Activated CD4-positive, alpha-beta T cell treated with anti-CD3 and anti-CD28 coated beads, Interleukin-2, amount 10 ng/mL, durations not matched to agents 24 days and 14 days (primary cell): ENCODE measurements at regions of chr10 and their contacts with region 1.

Region 1: GRCh38 chr10:97701438-97702069 is 12.0 kb upstream of the MARVELD1 start:
- DNase-seq: peak; percentile 89
- H3K4me3 Mint-ChIP-seq: no peak overlapping the region
- H3K27ac Mint-ChIP-seq: no peak overlapping the region
- H3K4me1 Mint-ChIP-seq: no peaks in the 10 kb centered on the region
- H3K27me3 Mint-ChIP-seq: peaks cover 7% of the 10 kb centered on the region

Region 2: GRCh38 chr10:97356318-97356914 is 345.1 kb before region 1 on chr10:
- intact Hi-C with region 1: no loop called
- DNase-seq: no peak
- H3K4me3 Mint-ChIP-seq: no peak overlapping the region
- H3K27ac Mint-ChIP-seq: no peak overlapping the region
- H3K4me1 Mint-ChIP-seq: no peaks in the 10 kb centered on the region
- H3K27me3 Mint-ChIP-seq: no peaks in the 10 kb centered on the region

Region 3: GRCh38 chr10:97553575-97554031 is 148.0 kb before region 1 on chr10:
- intact Hi-C with region 1: no loop called
- DNase-seq: peak; percentile 88
- H3K4me3 Mint-ChIP-seq: no peak overlapping the region
- H3K27ac Mint-ChIP-seq: no peak overlapping the region
- H3K4me1 Mint-ChIP-seq: peaks cover 6% of the 10 kb centered on the region
- H3K27me3 Mint-ChIP-seq: peaks cover 2% of the 10 kb centered on the region

Region 4: DNA sequence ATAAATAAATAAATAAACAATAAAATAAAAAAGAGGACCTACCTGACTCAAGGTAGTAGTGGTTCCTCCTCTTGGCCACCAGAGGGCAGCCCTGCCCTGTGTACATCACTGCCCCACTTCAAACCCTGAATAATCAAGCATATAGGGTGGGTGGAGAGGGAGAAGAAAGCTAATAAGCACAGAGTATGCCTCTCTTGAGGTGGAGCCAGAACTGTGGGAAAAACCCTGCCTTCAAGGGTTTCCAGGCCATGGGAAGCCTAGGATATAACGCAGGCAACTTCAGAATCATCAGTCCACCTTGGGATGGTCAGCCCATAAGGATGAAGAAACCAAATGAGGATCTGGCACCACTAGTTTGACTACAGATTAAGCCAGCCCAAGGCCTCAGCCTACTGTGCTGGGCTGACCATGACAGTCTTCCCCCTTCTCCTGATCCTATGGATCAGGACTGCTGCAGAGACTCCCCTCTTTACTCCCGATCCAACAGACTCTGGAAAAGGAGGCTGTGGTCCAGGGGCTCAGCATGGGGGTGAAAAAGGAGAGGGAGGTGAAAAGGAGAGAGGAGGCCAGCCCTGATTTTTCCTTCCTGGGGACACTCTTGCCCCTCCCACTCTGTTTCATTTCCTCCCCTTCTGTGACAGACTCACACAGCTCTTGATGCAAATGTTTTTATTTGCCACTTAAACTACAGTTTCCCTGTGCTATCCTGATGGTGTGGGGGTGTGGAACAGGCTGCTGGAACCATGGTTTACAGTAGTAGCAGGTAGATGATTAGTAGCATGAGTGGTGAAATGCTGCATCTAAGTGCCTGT is 24.6 kb before region 1 on chr10:
- intact Hi-C with region 1: loop called (anchors 1 kb)
- DNase-seq: peak; percentile 79
- H3K4me3 Mint-ChIP-seq: no peak overlapping the region
- H3K27ac Mint-ChIP-seq: no peak overlapping the region
- H3K4me1 Mint-ChIP-seq: peaks cover 8% of the 10 kb centered on the region
- H3K27me3 Mint-ChIP-seq: no peaks in the 10 kb centered on the region